Activated B cell treated with CpG ODN at 0.5 μM for 24 hours (primary cell): ENCODE measurements at regions of chr10 and their contacts with region 1.

Region 1: GRCh38 chr10:92737484-92737883 is 47.7 kb downstream of the HHEX start:
- DNase-seq: no peak
- ATAC-seq: no peak
- H3K4me3 Mint-ChIP-seq: no peak overlapping the region
- H3K27ac Mint-ChIP-seq: no peak overlapping the region
- H3K4me1 Mint-ChIP-seq: peaks cover 71% of the 10 kb centered on the region
- H3K27me3 Mint-ChIP-seq: no peaks in the 10 kb centered on the region
- CTCF ChIP-seq: no peak

Region 2: GRCh38 chr10:92544296-92544695 is 193.2 kb before region 1 on chr10:
- CTCF ChIA-PET with region 1: no interaction called
- POLR2A ChIA-PET with region 1: interaction called, 14 read pairs
- intact Hi-C with region 1: no loop called
- DNase-seq: no peak
- ATAC-seq: peak; percentile 50
- H3K4me3 Mint-ChIP-seq: no peak overlapping the region
- H3K27ac Mint-ChIP-seq: no peak overlapping the region
- H3K4me1 Mint-ChIP-seq: peaks cover 32% of the 10 kb centered on the region
- H3K27me3 Mint-ChIP-seq: no peaks in the 10 kb centered on the region
- CTCF ChIP-seq: no peak